PC-3 (cell line): ENCODE measurements at regions of chr1 and their contacts with region 1.

Region 1: GRCh38 chr1:39132505-39133339 is 71.8 kb upstream of the MACF1 start:
- DNase-seq: peak; percentile 94
- ATAC-seq: peak; percentile 68
- H3K4me3 ChIP-seq: peak overlapping the region; percentile 25
- H3K27ac ChIP-seq: peak overlapping the region; percentile 91
- H3K4me1 ChIP-seq: peaks cover 62% of the 10 kb centered on the region
- H3K27me3 ChIP-seq: no peaks in the 10 kb centered on the region
- CTCF ChIP-seq: peak; percentile 81

Region 2: DNA sequence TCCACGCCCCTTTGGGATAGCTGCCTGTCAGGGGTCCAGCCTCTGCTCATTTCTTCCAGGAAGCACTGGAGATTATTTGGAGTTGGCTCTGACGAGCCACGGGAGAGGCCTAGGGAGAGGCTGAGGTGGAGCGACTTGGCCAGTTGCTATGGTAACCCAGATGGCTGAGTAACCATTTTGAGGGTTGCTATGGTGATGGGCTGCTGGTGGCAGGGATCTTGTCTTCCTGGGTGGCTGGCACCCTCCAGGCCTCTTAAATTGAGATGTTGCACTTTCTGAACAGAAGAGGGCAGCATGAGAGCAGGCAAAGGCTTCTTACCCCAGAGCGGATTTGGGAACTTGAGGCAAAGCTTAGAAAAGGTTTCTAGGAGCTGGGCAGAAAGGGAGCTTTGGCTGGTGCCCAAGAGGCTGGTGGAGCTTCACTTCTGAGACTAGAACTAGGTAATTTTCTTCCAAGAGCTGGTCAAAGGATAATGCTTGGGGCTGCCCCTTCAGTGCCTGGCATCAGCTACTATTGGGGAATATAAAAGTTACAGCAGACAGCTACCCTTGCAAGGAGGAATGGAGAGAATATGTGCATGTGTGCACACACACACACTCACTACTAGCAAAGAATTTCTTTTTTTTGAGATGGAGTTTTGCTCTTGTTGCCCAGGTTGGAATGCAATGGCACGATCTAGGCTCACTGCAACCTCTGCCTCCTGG is 34.0 kb before region 1 on chr1:
- CTCF ChIA-PET with region 1: interaction called, 6 read pairs
- POLR2A ChIA-PET with region 1: no interaction called
- intact Hi-C with region 1: loop called (anchors 1 kb)
- DNase-seq: peak; percentile 87
- ATAC-seq: peak; percentile 52
- H3K4me3 ChIP-seq: no peak overlapping the region
- H3K27ac ChIP-seq: no peak overlapping the region
- H3K4me1 ChIP-seq: peaks cover 26% of the 10 kb centered on the region
- H3K27me3 ChIP-seq: no peaks in the 10 kb centered on the region
- CTCF ChIP-seq: peak; percentile 91

Region 3: GRCh38 chr1:39149509-39149908 is 16.8 kb after region 1 on chr1:
- CTCF ChIA-PET with region 1: no interaction called
- POLR2A ChIA-PET with region 1: no interaction called
- intact Hi-C with region 1: loop called (anchors 2 kb)
- DNase-seq: no peak
- ATAC-seq: no peak
- H3K4me3 ChIP-seq: no peak overlapping the region
- H3K27ac ChIP-seq: no peak overlapping the region
- H3K4me1 ChIP-seq: peaks cover 19% of the 10 kb centered on the region
- H3K27me3 ChIP-seq: no peaks in the 10 kb centered on the region
- CTCF ChIP-seq: no peak

Region 4: DNA sequence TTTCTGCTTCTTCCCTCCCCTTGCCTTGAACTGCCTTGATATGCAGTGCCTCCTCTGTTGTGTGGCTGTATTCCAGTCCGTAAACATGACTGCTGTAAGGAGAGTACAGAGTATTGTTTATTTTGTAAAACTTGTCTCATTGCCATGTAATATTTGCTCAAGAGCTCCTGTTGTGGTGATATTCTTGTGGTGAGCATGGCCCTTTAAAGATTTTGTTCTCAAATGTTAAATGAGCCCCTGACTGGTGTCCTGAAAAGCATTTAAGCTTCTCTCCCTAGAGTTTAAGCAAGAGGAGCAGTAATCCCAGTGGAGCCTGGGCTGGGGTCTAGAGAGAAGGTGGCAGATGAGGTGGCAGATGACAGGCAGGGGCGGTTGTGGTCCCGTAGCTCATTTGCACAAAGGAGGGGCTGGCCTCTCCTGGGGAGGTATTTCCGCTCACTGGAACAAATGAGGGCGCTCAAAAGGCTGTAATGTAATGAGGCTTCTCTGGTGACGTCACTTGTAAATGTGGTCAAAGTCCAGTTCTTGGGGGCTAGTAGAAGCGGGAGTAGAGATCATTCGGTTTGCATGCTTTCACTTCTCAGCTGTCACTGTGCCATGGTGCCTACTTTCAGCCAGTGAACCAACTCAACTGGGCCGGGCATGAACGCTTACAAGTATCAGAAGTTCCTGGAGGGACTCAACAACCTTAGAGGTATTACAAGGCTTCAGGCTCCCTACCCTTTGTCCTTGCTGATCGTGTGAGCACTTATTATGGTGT is 25.8 kb after region 1 on chr1:
- CTCF ChIA-PET with region 1: interaction called, 11 read pairs
- POLR2A ChIA-PET with region 1: interaction called, 3 read pairs
- intact Hi-C with region 1: loop called (anchors 1 kb)
- DNase-seq: peak; percentile 91
- ATAC-seq: peak; percentile 65
- H3K4me3 ChIP-seq: peak overlapping the region; percentile 61
- H3K27ac ChIP-seq: peak overlapping the region; percentile 97
- H3K4me1 ChIP-seq: peaks cover 65% of the 10 kb centered on the region
- H3K27me3 ChIP-seq: no peaks in the 10 kb centered on the region
- CTCF ChIP-seq: 0 out of 2 replicates have a peak, but pooled peaks have one; percentile 30

Region 5: GRCh38 chr1:39183503-39184353 is 51.0 kb after region 1 on chr1:
- CTCF ChIA-PET with region 1: interaction called, 6 read pairs
- POLR2A ChIA-PET with region 1: no interaction called
- intact Hi-C with region 1: loop called (anchors 2 kb)
- DNase-seq: peak; percentile 98
- ATAC-seq: peak; percentile 77
- H3K4me3 ChIP-seq: no peak overlapping the region
- H3K27ac ChIP-seq: peak overlapping the region; percentile 82
- H3K4me1 ChIP-seq: peaks cover 68% of the 10 kb centered on the region
- H3K27me3 ChIP-seq: no peaks in the 10 kb centered on the region
- CTCF ChIP-seq: peak; percentile 65

Region 6: GRCh38 chr1:39258146-39258924 is 125.6 kb after region 1 on chr1:
- CTCF ChIA-PET with region 1: no interaction called
- POLR2A ChIA-PET with region 1: no interaction called
- intact Hi-C with region 1: loop called (anchors 2 kb)
- DNase-seq: peak; percentile 84
- ATAC-seq: peak; percentile 84
- H3K4me3 ChIP-seq: no peak overlapping the region
- H3K27ac ChIP-seq: no peak overlapping the region
- H3K4me1 ChIP-seq: no peaks in the 10 kb centered on the region
- H3K27me3 ChIP-seq: no peaks in the 10 kb centered on the region
- CTCF ChIP-seq: peak; percentile 95